Kidney (tissue), 22 donors: ENCODE measurements at regions of chr1 and their contacts with region 1.

Region 1: GRCh38 chr1:58652651-58653184 is 47.1 kb downstream of the MYSM1 start:
- DNase-seq: peak in 4 of 5 donors; percentile 53 to 91 (median 78)
- H3K4me3 ChIP-seq: no peak overlapping the region
- H3K27ac ChIP-seq: no peak overlapping the region
- H3K4me1 ChIP-seq: no peaks in the 10 kb centered on the region
- H3K27me3 ChIP-seq: no peaks in the 10 kb centered on the region
- CTCF ChIP-seq: peak; percentile 90

Region 2: GRCh38 chr1:58515794-58516401 is 136.8 kb before region 1 on chr1:
- intact Hi-C with region 1: loop called (anchors 10 kb)
- DNase-seq: peak in 4 of 5 donors; percentile 9 to 86 (median 56)
- H3K4me3 ChIP-seq: no peak overlapping the region
- H3K27ac ChIP-seq: no peak overlapping the region
- H3K4me1 ChIP-seq: no peaks in the 10 kb centered on the region
- H3K27me3 ChIP-seq: no peaks in the 10 kb centered on the region
- CTCF ChIP-seq: peak; percentile 69